Dendritic cell treated with granulocyte-macrophage colony-stimulating factor and Interleukin-4, amounts not matched to agents 40 ng/mL and 50 ng/mL, for 4 days (primary cell): ENCODE measurements at regions of chr11 and their contacts with region 1.

Region 1: DNA sequence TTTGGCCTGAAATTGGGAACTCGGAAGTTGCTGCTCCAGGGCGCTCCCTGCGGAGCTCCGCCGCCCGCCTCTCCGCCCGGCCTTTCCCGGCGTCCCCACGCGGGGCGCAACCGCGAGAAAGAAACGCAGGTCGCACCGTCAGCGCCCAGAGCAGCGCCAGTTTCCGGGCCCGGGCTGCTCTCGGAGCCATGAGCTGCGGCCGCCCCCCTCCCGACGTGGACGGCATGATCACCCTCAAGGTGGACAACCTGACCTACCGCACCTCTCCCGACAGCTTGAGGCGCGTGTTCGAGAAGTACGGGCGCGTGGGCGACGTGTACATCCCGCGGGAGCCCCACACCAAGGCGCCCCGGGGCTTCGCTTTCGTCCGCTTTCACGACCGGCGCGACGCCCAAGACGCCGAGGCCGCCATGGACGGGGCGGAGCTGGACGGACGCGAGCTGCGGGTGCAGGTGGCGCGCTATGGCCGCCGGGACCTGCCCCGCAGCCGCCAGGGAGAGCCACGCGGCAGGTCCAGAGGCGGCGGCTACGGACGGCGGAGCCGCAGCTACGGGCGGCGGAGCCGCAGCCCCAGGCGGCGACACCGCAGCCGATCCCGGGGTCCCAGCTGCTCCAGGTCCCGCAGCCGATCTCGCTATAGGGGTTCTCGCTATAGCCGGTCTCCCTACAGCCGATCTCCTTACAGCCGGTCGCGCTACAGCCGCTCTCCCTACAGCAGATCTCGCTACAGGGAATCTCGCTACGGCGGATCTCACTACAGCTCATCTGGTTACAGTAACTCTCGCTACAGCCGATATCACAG is 521 bp downstream of the SRSF8 start:
- H3K4me3 Mint-ChIP-seq: peak overlapping the region; percentile 86
- H3K27ac Mint-ChIP-seq: peak overlapping the region; percentile 95
- H3K4me1 Mint-ChIP-seq: peaks cover 10% of the 10 kb centered on the region
- H3K27me3 Mint-ChIP-seq: peaks cover 2% of the 10 kb centered on the region

Region 2: GRCh38 chr11:94973099-94973968 is 93.9 kb before region 1 on chr11 and contains the starts of genes CWC15 and KDM4D:
- intact Hi-C with region 1: loop called (anchors 2 kb)
- H3K4me3 Mint-ChIP-seq: peak within 1 kb of the TSS; percentile 97
- H3K27ac Mint-ChIP-seq: peak within 1 kb of the TSS; percentile 97
- H3K4me1 Mint-ChIP-seq: peaks cover 12% of the 10 kb centered on the region
- H3K27me3 Mint-ChIP-seq: peaks cover 7% of the 10 kb centered on the region

Region 3: DNA sequence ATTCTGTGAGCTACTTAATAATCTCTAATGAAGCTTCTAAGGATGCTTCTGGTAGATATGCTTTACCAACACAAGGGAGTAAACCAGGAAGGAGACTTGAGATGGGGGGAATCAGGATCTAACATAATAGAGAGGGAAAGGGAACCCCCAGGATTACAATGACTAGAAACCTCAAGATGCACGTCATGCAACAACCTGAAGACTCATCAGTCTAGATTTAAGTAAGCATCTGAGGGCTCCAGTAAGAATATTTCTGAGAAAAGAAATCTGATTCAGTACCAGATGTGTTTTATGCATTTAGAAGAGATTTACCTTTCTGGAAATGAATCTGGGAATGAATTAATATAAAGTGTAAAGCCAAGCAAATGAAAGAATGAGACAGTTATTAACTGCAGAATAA is 78.5 kb before region 1 on chr11:
- intact Hi-C with region 1: loop called (anchors 5 kb)
- H3K4me3 Mint-ChIP-seq: no peak overlapping the region
- H3K27ac Mint-ChIP-seq: no peak overlapping the region
- H3K4me1 Mint-ChIP-seq: no peaks in the 10 kb centered on the region
- H3K27me3 Mint-ChIP-seq: peaks cover 15% of the 10 kb centered on the region

Region 4: GRCh38 chr11:95089620-95090542 is 22.6 kb after region 1 on chr11 and contains the start of gene ENDOD1:
- intact Hi-C with region 1: loop called (anchors 2 kb)
- H3K4me3 Mint-ChIP-seq: peak within 1 kb of the TSS; percentile 92
- H3K27ac Mint-ChIP-seq: peak within 1 kb of the TSS; percentile 92
- H3K4me1 Mint-ChIP-seq: peaks cover 26% of the 10 kb centered on the region
- H3K27me3 Mint-ChIP-seq: peaks cover 27% of the 10 kb centered on the region

Region 5: DNA sequence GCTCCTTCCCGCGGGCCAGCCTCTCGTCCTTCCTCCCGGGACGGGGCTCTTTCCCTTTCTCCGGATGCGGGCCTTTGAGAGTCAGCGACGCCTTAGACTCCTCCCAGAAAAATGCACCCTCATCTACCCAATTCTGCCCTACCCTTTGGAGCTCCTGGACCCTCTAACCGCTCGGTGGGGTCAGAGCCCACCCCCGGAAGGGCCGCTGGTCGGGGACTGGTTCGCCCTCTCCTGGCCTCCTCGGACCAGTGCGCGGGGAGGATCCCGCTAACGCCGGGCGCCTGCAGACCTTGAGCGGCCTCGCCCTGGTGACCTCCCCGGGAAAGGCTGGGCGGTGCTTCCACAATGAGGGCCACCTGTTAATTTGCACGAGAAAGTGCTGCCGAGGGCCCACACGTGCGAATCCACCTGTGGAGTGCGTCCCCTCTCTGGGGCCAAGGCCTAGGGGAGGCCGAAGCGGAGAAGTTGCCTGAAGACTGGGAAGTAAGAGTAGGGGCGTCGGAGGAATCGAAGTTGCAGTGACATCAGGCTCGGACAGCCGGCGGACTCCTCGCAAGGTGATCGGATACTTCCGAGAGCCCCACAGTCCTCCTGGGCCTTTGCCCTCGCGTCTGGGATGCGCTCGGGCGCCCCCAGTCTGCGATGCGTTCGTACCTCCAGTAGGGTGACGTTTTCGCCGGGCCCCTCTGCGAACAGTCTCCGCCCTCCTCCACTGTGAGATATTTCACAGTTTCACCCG is 83.9 kb after region 1 on chr11:
- intact Hi-C with region 1: loop called (anchors 2 kb)
- H3K4me3 Mint-ChIP-seq: peak overlapping the region; percentile 86
- H3K27ac Mint-ChIP-seq: peak overlapping the region; percentile 86
- H3K4me1 Mint-ChIP-seq: peaks cover 52% of the 10 kb centered on the region
- H3K27me3 Mint-ChIP-seq: peaks cover 21% of the 10 kb centered on the region

Region 6: DNA sequence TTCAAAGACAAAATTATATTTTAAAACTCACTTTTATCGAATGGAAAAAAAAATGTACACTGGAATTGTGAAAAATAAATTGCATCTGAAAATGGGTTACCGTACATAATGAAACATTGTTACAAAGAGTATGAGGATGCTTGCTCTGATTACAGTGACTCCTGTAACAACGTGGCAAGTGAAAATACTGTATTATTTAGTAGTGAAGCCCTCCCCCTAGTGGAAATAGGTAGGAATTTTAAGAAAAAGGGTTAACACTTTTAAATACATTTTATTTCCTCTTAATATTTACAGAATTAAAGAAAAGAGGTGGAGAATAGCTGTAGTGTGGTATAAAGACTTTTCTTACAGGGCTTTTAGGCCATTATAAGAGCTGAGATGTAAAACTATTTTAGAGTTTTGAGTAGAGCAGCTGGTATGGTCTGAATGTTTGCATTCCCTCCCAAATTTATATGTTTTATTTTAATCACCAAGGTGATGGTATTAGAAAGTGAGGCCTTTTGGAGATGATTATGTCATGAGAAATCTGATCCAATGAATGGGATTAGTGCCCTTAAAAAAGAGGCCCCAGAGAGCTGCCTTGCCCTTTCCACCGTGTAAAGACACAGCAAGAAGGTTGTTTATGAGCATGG is 697.1 kb after region 1 on chr11:
- intact Hi-C with region 1: loop called (anchors 2 kb)
- H3K4me3 Mint-ChIP-seq: no peak overlapping the region
- H3K27ac Mint-ChIP-seq: no peak overlapping the region
- H3K4me1 Mint-ChIP-seq: peaks cover 19% of the 10 kb centered on the region
- H3K27me3 Mint-ChIP-seq: no peaks in the 10 kb centered on the region